Left cardiac atrium (tissue), 4 donors: ENCODE measurements at regions of chr7 and their contacts with region 1.

Region 1: DNA sequence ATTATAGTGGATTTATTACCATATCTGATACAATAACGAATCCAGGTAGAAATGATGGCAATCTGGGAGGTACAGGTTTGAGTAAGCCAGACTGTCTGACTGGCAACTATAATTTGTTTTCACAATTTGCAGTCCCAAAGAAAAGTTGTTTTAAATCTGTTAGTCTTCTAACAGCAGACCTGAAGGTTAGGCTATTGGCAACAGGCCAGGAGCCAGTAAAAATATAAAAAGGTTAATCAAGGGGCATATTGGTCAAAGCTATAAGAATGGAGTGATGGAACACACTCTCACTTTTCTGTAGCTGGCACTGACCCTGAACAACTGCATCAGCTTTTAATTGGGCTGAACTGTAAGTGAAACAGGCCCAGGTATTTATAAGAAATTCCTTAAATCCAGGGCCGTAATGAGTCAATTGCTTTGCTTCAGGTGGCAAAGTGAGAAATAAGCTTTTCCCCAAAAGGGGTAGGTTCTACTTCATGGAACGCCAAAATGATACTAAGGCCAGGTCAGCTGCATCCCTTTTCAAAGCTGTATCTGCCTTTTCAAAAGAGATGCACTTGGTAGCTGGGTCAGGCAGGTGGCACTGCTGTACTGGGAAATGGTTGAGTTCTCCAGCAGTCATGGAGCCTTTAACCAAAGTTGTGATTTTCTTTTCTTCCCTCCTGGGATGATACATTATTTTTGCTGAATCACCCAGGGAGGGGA is 7.0 kb upstream of the GPR22 start:
- DNase-seq: peak; percentile 56
- ATAC-seq: peak; percentile 94 to 95

Region 2: GRCh38 chr7:107201795-107202450 is 261.0 kb before region 1 on chr7:
- intact Hi-C with region 1: loop called in 1 of 2 experiments (anchors 10 kb)
- DNase-seq: no peak
- ATAC-seq: peak; percentile 77 to 84

Region 3: DNA sequence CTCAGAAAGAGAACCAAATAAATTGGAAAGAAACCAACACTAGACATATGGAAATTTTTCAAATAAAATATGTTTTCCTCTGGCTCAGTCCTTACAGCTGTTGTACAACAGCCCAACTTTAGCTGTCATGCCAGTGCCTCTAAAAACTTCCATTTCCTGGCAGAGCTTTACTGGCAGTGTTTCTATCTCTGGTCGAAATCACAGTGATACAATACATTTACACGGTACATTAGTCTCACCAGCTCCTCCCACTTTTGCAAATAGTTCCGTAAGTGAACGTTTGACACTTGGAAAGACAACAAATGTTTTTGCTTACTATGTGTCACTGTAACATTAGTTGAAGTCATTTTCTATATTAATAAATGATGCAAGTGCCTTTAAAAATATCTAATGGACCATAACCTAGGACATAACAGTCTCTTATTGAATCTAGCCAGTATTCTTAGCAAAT is 146.9 kb after region 1 on chr7:
- intact Hi-C with region 1: loop called in 1 of 2 experiments (anchors 10 kb)
- DNase-seq: no peak
- ATAC-seq: peak; percentile 41 to 70